ENCODE measurements at regions of chr2 and their contacts with region 1.

Region 1: GRCh38 chr2:238426568-238427434 is at the start of gene ASB1:
- DNase-seq: peak; percentile 87
- ATAC-seq: peak; percentile 84
- H3K4me3 ChIP-seq: peak within 1 kb of the TSS; percentile 73 to 93 (median 81)
- H3K4me3 Mint-ChIP-seq: peak within 1 kb of the TSS; percentile 94
- H3K27ac ChIP-seq: peak within 1 kb of the TSS; percentile 81 to 92
- H3K27ac Mint-ChIP-seq: peak within 1 kb of the TSS; percentile 89
- H3K4me1 ChIP-seq: peaks cover 19 to 26% of the 10 kb centered on the region in 2 donors
- H3K4me1 Mint-ChIP-seq: peaks cover 43% of the 10 kb centered on the region
- H3K27me3 ChIP-seq: no peaks in the 10 kb centered on the region
- H3K27me3 Mint-ChIP-seq: no peaks in the 10 kb centered on the region
- CTCF ChIP-seq: no peak
- total RNA-seq, gene ASB1: 50.7 and 51.7 TPM in 2 replicates

Region 2: DNA sequence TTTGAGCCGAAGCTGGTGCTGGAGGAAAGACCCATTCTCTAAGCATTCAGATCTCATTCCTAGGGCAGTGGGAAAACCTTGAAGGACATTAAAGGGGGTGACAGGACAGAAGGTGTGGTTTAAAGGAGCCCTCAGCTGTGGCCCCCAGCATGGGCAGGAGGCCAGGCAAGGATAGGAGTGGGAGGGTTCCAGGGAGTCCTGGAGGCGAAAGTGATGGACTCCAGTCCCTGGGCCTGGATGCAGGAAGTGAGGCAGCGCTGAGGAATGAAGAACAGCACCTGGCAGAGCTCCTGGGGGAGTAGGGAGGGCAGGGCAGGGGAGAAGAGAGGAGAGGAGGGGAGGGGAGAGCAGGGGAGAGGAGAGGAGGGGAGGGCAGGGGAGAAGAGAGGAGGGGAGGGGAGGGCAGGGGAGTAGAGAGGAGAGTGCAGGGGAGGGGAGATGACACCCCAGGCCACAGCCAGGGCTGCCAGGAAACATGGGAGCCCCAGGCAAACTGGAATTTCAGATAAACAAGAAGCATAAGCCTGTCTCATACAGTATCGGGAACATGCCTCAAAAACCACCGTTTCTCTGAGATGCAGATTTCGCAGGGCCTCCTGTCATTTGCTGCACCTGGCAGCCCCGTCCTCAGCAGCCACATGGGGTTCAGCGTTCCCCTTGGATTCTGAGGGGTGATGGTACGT is 561.7 kb before region 1 on chr2:
- CTCF ChIA-PET with region 1: no interaction called
- POLR2A ChIA-PET with region 1: no interaction called
- intact Hi-C with region 1: no loop called
- DNase-seq: no peak
- ATAC-seq: no peak
- H3K4me3 ChIP-seq: no peak overlapping the region
- H3K4me3 Mint-ChIP-seq: no peak overlapping the region
- H3K27ac ChIP-seq: no peak overlapping the region
- H3K27ac Mint-ChIP-seq: no peak overlapping the region
- H3K4me1 ChIP-seq: no peaks in the 10 kb centered on the region
- H3K4me1 Mint-ChIP-seq: peaks cover 13% of the 10 kb centered on the region
- H3K27me3 ChIP-seq: peaks cover 0 to 30% (median 5%) of the 10 kb centered on the region in 4 experiments
- H3K27me3 Mint-ChIP-seq: peaks cover 50% of the 10 kb centered on the region
- CTCF ChIP-seq: no peak

Region 3: DNA sequence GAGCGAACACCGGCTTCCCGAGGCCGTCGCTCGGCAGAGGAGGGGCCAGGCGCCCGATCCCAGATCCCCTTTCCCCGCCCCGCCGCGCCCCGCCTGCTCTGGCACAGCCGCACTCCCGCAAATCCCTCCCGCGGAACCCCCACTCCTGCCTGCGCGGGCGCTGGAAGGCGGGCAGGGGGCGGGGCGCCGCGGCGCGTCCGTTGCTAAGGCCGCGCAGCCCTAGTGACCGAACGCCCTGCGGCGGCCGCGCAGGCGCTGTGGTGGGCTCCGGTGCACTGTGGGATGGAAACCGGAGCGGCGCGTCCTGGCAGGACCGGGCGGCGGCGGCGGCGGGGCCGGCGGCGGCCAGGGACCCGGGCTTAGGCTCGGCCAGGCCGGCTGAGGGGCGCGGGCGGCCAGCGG is 106.6 kb before region 1 on chr2 and contains the start of gene TRAF3IP1:
- CTCF ChIA-PET with region 1: no interaction called
- POLR2A ChIA-PET with region 1: no interaction called
- intact Hi-C with region 1: loop called (anchors 1 kb)
- DNase-seq: peak; percentile 90
- ATAC-seq: peak; percentile 98
- H3K4me3 ChIP-seq: peak within 1 kb of the TSS; percentile 19 to 74 (median 53)
- H3K4me3 Mint-ChIP-seq: peak within 1 kb of the TSS; percentile 85
- H3K27ac ChIP-seq: no peak within 1 kb of the TSS
- H3K27ac Mint-ChIP-seq: peak within 1 kb of the TSS; percentile 70
- H3K4me1 ChIP-seq: peaks cover 12 to 16% of the 10 kb centered on the region in 2 donors
- H3K4me1 Mint-ChIP-seq: peaks cover 15% of the 10 kb centered on the region
- H3K27me3 ChIP-seq: peaks cover 0 to 3% (median 0%) of the 10 kb centered on the region in 4 experiments
- H3K27me3 Mint-ChIP-seq: peaks cover 9% of the 10 kb centered on the region
- CTCF ChIP-seq: no peak
- total RNA-seq, gene TRAF3IP1: 15.2 and 15.5 TPM in 2 replicates

Region 4: DNA sequence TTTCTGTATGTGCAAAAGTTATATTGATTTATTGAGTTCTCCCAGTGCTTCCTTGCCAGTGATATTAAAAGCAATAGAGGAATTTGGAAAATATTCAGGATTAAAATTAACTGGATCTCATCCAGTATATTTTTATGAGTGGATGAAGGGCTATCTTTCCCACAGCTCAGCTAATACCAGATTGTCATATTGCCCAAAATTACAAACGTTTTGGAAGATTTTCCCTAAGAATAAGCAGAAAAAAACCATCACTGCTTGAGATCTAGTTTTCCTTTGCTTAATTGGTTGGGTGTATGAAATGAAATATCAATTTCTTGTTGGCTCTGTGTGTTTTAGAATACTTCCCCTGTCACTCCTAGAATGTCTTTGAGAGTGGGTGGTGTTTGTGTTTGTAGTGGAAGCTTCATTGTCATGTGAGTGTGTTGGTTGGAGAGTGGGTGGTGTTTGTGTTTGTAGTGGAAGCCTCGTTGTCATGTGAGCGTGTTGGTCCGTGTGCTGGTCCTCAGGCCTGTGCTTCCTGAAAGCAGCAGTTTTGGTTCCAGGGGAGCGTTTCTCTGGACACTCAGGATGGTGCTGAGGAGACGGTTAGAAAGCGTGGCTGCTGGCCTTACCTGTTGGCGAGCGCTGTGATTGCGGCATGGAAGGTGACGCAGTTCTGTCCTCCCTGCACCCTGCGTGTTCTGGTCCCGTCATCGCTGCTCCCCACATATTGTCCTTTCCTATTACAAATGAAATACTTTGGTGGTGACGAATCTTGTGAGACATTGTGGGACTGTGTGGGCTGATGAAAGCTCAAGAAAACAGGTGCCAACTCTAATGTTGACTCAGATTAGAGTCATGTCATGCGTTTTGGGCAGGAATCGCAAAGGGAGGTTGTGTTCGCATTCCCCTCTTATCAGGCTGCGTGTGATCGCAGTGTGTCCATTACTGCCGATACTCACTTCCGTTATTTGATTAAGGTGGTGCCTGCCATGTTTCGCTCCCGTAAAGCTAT is 12.4 kb after region 1 on chr2:
- CTCF ChIA-PET with region 1: no interaction called
- POLR2A ChIA-PET with region 1: no interaction called
- intact Hi-C with region 1: no loop called
- DNase-seq: no peak
- ATAC-seq: no peak
- H3K4me3 ChIP-seq: no peak overlapping the region
- H3K4me3 Mint-ChIP-seq: no peak overlapping the region
- H3K27ac ChIP-seq: no peak overlapping the region
- H3K27ac Mint-ChIP-seq: no peak overlapping the region
- H3K4me1 ChIP-seq: no peaks in the 10 kb centered on the region
- H3K4me1 Mint-ChIP-seq: peaks cover 26% of the 10 kb centered on the region
- H3K27me3 ChIP-seq: no peaks in the 10 kb centered on the region
- H3K27me3 Mint-ChIP-seq: no peaks in the 10 kb centered on the region
- CTCF ChIP-seq: no peak

Region 5: DNA sequence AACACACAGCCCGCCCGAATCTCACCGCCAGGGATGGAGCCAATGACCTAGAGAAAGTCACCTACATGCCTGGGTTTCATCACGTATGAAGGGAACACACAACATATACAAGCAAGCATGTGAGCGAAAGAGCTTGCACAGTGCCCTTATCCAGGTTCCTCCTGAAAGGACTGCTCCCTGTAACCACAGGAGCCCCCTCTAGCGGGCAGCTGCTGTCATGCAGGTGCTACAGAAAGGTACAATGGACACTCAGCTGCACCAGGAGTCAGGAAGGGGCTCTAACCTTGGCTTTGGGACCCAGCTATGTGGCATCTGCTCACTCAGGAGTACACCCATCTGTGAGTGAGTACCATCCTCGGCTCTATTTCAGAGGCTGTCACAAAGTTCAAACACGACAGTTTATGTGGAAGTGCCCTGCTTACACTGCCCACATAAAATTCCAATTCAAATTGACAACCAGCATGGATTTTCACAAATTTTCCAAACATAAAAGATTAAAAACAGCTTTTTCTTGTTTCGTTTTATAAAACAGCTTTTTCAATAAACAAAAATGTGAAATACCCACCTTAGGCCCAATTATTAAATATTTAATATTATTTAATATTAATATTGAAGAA is 1594.8 kb after region 1 on chr2:
- CTCF ChIA-PET with region 1: no interaction called
- POLR2A ChIA-PET with region 1: no interaction called
- intact Hi-C with region 1: loop called (anchors 10 kb)
- DNase-seq: peak; percentile 67
- ATAC-seq: no peak
- H3K4me3 ChIP-seq: no peak overlapping the region
- H3K4me3 Mint-ChIP-seq: no peak overlapping the region
- H3K27ac ChIP-seq: no peak overlapping the region
- H3K27ac Mint-ChIP-seq: no peak overlapping the region
- H3K4me1 ChIP-seq: peaks cover 11 to 15% of the 10 kb centered on the region in 2 donors
- H3K4me1 Mint-ChIP-seq: peaks cover 19% of the 10 kb centered on the region
- H3K27me3 ChIP-seq: no peaks in the 10 kb centered on the region
- H3K27me3 Mint-ChIP-seq: no peaks in the 10 kb centered on the region
- CTCF ChIP-seq: peak; percentile 84

Measured in B cell (primary cell).